Mammary epithelial cell (primary cell): ENCODE measurements at regions of chr2 and their contacts with region 1.

Region 1: GRCh38 chr2:46506131-46506706 is 26.9 kb downstream of the TMEM247 start:
- DNase-seq: no peak
- H3K4me3 ChIP-seq: no peak overlapping the region
- H3K27ac ChIP-seq: no peak overlapping the region
- H3K4me1 ChIP-seq: peaks cover 5% of the 10 kb centered on the region
- H3K27me3 ChIP-seq: no peaks in the 10 kb centered on the region
- CTCF ChIP-seq: no peak

Region 2: GRCh38 chr2:46815121-46815785 is 309.0 kb after region 1 on chr2:
- CTCF ChIA-PET with region 1: no interaction called
- dilution Hi-C with region 1: no loop called
- in situ Hi-C with region 1: no loop called
- intact Hi-C with region 1: loop called (anchors 5 kb)
- DNase-seq: no peak
- H3K4me3 ChIP-seq: no peak overlapping the region
- H3K27ac ChIP-seq: no peak overlapping the region
- H3K4me1 ChIP-seq: peaks cover 11% of the 10 kb centered on the region
- H3K27me3 ChIP-seq: no peaks in the 10 kb centered on the region
- CTCF ChIP-seq: no peak

Region 3: GRCh38 chr2:47323009-47323821 is 817.0 kb after region 1 on chr2:
- CTCF ChIA-PET with region 1: no interaction called
- dilution Hi-C with region 1: no loop called
- in situ Hi-C with region 1: no loop called
- intact Hi-C with region 1: no loop called
- DNase-seq: peak; percentile 53
- H3K4me3 ChIP-seq: no peak overlapping the region
- H3K27ac ChIP-seq: no peak overlapping the region
- H3K4me1 ChIP-seq: no peaks in the 10 kb centered on the region
- H3K27me3 ChIP-seq: no peaks in the 10 kb centered on the region
- CTCF ChIP-seq: peak; percentile 99